ENCODE measurements at regions of chr5 and their contacts with region 1.

Region 1: GRCh38 chr5:138789771-138790242 is 36.6 kb downstream of the CTNNA1 start:
- DNase-seq: peak; percentile 15
- ATAC-seq: peak; percentile 93
- H3K4me3 Mint-ChIP-seq: no peak overlapping the region
- H3K27ac Mint-ChIP-seq: peak overlapping the region; percentile 91
- H3K4me1 Mint-ChIP-seq: peaks cover 25% of the 10 kb centered on the region
- H3K27me3 Mint-ChIP-seq: no peaks in the 10 kb centered on the region
- CTCF ChIP-seq: peak; percentile 37; the same call in 1 of the 2 replicates

Region 2: DNA sequence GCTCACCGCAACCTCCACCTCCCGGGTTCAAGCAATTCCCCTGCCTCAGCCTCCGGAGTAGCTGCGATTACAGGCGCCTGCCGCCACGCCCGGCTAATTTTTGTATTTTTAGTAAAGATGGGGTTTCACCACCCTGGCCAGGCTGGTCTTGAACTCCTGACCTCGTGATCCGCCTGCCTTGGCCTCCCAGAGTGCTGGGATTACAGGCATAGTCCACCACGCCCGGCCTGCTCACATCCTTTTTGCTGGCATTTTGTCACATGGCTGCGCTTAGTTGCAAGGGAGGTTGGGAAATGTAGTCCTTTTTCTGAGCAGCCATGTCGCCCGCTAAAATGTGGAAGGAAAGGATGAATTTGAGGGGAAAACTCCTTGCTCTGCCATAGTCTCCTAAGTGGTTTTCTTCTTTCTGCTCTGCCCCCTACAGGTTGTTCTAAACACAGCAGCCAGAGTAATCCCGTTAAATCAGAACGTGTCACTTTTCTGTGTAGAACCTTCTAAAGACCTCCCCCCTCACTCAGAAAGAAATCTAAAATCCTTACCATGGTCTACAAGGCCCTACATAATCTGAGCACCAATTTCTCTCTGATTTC is 156.8 kb before region 1 on chr5:
- CTCF ChIA-PET with region 1: no interaction called
- POLR2A ChIA-PET with region 1: no interaction called
- DNase-seq: peak; percentile 83
- ATAC-seq: peak; percentile 93
- H3K4me3 Mint-ChIP-seq: peak overlapping the region; percentile 28; the same call in 1 of the 2 replicates
- H3K27ac Mint-ChIP-seq: no peak overlapping the region
- H3K4me1 Mint-ChIP-seq: peaks cover 12% of the 10 kb centered on the region
- H3K27me3 Mint-ChIP-seq: no peaks in the 10 kb centered on the region; the same call in 1 of the 2 replicates
- CTCF ChIP-seq: peak; percentile 65

Region 3: GRCh38 chr5:138725138-138725833 is 64.5 kb before region 1 on chr5:
- CTCF ChIA-PET with region 1: interaction called, 15 read pairs
- POLR2A ChIA-PET with region 1: no interaction called
- DNase-seq: peak; percentile 78
- ATAC-seq: peak; percentile 90
- H3K4me3 Mint-ChIP-seq: peak overlapping the region; percentile 30; the same call in 1 of the 2 replicates
- H3K27ac Mint-ChIP-seq: peak overlapping the region; percentile 96
- H3K4me1 Mint-ChIP-seq: peaks cover 45% of the 10 kb centered on the region
- H3K27me3 Mint-ChIP-seq: no peaks in the 10 kb centered on the region; the same call in 1 of the 2 replicates
- CTCF ChIP-seq: 0 out of 2 replicates have a peak, but pooled peaks have one; percentile 11

Region 4: GRCh38 chr5:138760448-138761110 is 29.2 kb before region 1 on chr5:
- CTCF ChIA-PET with region 1: interaction called, 14 read pairs
- POLR2A ChIA-PET with region 1: no interaction called
- DNase-seq: no peak
- ATAC-seq: no peak
- H3K4me3 Mint-ChIP-seq: no peak overlapping the region
- H3K27ac Mint-ChIP-seq: 0 out of 2 replicates have a peak overlapping the region, but pooled peaks have one; percentile 6
- H3K4me1 Mint-ChIP-seq: peaks cover 43% of the 10 kb centered on the region
- H3K27me3 Mint-ChIP-seq: no peaks in the 10 kb centered on the region
- CTCF ChIP-seq: no peak

Region 5: GRCh38 chr5:138809391-138809790 is 19.6 kb after region 1 on chr5:
- CTCF ChIA-PET with region 1: interaction called, 10 read pairs
- POLR2A ChIA-PET with region 1: no interaction called
- DNase-seq: no peak
- ATAC-seq: no peak
- H3K4me3 Mint-ChIP-seq: no peak overlapping the region
- H3K27ac Mint-ChIP-seq: no peak overlapping the region
- H3K4me1 Mint-ChIP-seq: no peaks in the 10 kb centered on the region
- H3K27me3 Mint-ChIP-seq: no peaks in the 10 kb centered on the region
- CTCF ChIP-seq: no peak

Region 6: DNA sequence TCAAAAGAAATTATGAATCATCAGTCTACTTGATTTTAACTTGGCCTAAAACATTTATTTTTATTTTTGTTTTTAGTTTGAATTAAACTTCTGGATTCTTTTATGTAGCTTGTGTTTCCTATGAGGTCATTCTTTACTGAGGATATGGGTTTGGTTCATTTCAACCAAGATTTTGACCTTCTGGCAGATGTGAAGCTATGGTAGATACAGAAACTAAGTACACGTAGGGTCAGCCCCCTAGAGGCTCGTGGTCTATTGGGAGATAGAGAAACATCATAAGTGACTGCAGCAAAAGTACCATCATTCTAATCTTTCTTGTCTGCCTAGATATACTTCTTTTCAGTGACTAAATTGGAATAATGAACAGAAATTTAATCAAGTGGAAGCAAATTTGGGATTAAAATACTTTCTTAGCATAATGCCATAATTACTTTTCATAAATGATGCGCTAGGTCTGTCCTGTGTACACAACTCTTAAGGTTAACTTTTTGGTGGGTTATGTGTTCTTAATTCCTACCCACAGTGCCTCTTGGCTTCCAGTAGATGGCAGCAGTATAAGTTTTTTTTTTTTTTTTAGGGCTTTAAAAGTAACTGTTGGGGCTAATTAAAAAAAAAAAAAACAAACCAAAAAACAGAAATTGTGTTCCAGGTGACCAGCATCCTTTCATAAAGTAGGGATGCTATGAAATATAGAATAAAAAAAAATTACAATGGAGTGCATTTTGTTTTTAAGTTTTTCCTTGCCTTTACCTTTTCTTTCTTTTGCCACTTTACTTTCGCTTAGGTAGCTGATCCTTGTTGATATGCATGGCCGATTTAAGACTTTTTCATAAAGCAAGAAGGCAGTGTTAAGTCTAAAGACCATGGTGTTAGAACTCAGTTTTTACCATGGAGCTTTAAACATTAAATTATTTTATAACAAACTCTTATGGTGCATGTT is 35.4 kb after region 1 on chr5:
- CTCF ChIA-PET with region 1: interaction called, 15 read pairs
- POLR2A ChIA-PET with region 1: no interaction called
- DNase-seq: no peak
- ATAC-seq: peak; percentile 63
- H3K4me3 Mint-ChIP-seq: no peak overlapping the region
- H3K27ac Mint-ChIP-seq: no peak overlapping the region; the same call in 1 of the 2 replicates
- H3K4me1 Mint-ChIP-seq: peaks cover 28% of the 10 kb centered on the region
- H3K27me3 Mint-ChIP-seq: no peaks in the 10 kb centered on the region
- CTCF ChIP-seq: no peak; the same call in 1 of the 2 replicates

Region 7: DNA sequence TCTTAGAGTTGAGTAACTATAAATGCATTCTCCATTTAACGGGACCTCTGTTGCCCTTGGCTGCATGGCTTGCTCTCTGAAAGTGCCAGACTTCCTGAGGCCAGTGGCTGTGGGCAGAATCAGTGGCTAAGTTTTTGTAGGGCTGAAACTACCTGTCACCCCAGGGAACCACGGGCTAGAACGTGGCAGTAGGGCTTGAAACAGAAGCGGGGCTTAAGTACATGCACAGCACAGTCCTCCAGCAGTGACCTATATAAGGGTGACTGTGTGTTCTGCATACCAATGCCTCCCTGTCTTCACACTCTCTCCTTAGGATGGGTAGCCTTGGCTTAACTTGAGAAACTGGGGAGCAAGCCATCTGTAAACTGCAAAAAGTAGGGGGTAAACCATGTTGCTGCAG is 128.9 kb after region 1 on chr5:
- CTCF ChIA-PET with region 1: no interaction called
- POLR2A ChIA-PET with region 1: no interaction called
- DNase-seq: no peak
- ATAC-seq: 0 out of 2 replicates have a peak, but pooled peaks have one; percentile 32
- H3K4me3 Mint-ChIP-seq: no peak overlapping the region
- H3K27ac Mint-ChIP-seq: peak overlapping the region; percentile 28; the same call in 1 of the 2 replicates
- H3K4me1 Mint-ChIP-seq: no peaks in the 10 kb centered on the region
- H3K27me3 Mint-ChIP-seq: no peaks in the 10 kb centered on the region
- CTCF ChIP-seq: no peak

Region 8: DNA sequence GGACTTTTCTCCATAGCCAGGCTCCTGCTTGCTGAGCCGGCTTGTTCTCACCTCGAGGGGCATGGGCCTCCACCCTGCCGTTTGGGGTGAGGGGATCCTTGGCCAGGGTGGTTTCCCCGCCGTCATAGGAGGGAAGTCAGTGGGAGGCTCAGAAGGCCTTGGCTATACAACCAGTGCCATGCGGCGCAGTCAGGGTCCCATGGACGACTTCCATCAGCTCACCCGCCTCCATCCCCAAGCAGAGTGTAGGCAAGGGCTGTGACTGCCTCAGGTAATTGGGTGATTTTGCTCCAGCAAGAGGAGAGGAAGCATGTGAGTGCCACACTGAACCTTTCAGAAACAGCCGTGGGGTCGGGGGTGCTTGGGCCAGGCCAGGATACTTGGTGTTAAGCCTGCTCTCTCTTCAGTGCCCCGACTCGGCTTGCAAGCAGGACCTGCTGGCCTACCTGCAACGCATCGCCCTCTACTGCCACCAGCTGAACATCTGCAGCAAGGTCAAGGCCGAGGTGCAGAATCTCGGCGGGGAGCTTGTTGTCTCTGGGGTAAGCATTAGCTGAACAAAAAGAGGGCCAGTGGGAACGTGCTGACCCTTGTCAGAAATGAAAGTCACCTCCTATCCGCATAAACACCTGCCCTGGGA is 142.5 kb after region 1 on chr5:
- CTCF ChIA-PET with region 1: interaction called, 12 read pairs
- POLR2A ChIA-PET with region 1: no interaction called
- DNase-seq: peak; percentile 71
- ATAC-seq: peak; percentile 81
- H3K4me3 Mint-ChIP-seq: no peak overlapping the region
- H3K27ac Mint-ChIP-seq: peak overlapping the region; percentile 6; the same call in 1 of the 2 replicates
- H3K4me1 Mint-ChIP-seq: peaks cover 31% of the 10 kb centered on the region
- H3K27me3 Mint-ChIP-seq: no peaks in the 10 kb centered on the region
- CTCF ChIP-seq: no peak